CD4-positive, alpha-beta T cell (primary cell): ENCODE measurements at regions of chr10 and their contacts with region 1.

Region 1: GRCh38 chr10:18104223-18104872 is 35.9 kb upstream of the CACNB2 start:
- DNase-seq: peak in 11 of 14 experiments; percentile 5 to 44 (median 22)
- ATAC-seq: no peak
- H3K4me3 ChIP-seq: no peak overlapping the region
- H3K4me3 Mint-ChIP-seq: no peak overlapping the region
- H3K27ac ChIP-seq: no peak overlapping the region
- H3K27ac Mint-ChIP-seq: no peak overlapping the region
- H3K4me1 ChIP-seq: no peaks in the 10 kb centered on the region
- H3K4me1 Mint-ChIP-seq: no peaks in the 10 kb centered on the region
- H3K27me3 ChIP-seq: no peaks in the 10 kb centered on the region
- H3K27me3 Mint-ChIP-seq: peaks cover 3% of the 10 kb centered on the region
- CTCF ChIP-seq: peak; percentile 58

Region 2: DNA sequence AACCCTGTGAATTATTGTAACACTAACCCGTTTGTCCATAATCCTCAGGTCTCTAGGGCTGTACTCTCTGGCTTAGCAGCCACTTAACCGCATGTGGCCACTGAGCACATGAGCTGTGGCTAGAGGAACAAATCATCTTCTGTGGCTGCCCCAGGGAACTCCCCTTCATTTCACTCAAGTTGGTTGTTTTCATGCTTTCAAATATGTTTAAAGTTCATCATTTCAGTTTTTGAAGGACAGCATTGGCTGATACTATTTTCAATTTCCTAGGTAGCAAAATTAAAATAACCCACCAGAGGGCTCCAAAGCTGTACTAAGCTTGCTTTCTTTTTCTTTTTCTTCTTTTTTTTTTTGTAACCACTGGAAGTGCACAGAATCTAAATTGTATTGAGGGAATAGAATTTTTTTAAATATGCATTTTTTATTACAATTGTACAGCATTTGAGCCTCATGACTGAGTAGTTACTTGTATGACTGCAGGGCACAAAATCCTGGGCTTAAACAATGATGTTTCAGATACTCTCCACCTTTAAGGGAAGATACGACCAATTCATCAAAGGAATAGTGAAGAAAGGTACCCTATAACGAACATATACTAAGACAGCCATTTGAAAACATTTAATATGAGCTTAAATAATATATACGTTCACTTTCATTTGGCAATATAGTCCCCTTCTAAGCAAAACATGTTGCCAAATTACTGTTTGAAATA is 256.6 kb before region 1 on chr10:
- CTCF ChIA-PET with region 1: no interaction called
- POLR2A ChIA-PET with region 1: no interaction called
- intact Hi-C with region 1: loop called in 1 of 2 experiments (anchors 10 kb)
- DNase-seq: peak in 3 of 14 experiments; percentile 14 to 23 (median 16)
- ATAC-seq: peak; percentile 29
- H3K4me3 ChIP-seq: no peak overlapping the region
- H3K4me3 Mint-ChIP-seq: no peak overlapping the region
- H3K27ac ChIP-seq: no peak overlapping the region
- H3K27ac Mint-ChIP-seq: no peak overlapping the region
- H3K4me1 ChIP-seq: no peaks in the 10 kb centered on the region
- H3K4me1 Mint-ChIP-seq: peaks cover 10% of the 10 kb centered on the region
- H3K27me3 ChIP-seq: peaks cover 0 to 3% of the 10 kb centered on the region in 2 experiments
- H3K27me3 Mint-ChIP-seq: peaks cover 5% of the 10 kb centered on the region
- CTCF ChIP-seq: no peak

Region 3: DNA sequence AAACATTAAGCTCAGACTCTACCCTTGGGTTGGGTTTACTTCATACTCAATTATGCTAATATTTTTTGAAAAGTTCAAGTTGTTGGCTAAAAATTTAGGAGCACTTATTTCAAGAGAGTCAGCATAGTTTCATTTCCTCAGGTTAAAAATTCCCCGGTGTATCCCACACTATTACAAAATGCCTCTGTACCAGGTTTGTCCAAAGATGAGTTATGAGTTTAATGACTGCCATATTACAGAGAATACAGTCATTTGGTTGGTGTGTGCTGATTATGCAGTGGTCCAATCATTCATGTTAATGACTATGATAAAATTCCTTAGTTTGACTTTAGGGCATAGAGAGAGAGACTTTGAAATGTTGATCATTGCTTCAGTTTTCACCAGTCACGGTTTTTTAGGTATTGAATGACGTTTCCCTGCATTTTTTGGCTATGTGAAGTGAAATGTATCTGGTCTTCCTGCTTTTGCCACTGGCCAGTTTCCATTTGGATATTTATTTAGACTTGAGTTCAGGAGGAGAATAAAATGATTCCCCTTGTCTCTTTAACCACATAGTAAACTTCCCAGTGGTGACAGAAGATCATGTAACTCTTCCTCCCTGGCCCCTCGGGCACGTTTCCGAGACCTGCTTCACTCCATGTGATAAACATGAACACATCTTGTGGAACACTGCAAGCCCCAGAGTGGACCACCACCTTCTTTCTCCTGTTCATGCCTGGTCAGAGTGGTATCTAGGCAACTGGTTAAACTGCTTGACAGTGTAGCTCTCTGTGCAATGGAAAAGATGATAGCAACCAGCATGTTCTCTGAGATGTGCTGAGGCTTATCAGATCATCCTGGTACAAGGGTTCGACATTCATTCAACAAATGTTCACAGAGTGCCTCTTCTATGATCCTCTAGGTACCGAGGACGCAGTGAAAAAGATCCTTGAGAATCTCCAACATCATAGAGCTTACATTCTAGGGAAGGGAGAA is 189.5 kb after region 1 on chr10:
- CTCF ChIA-PET with region 1: no interaction called
- POLR2A ChIA-PET with region 1: no interaction called
- intact Hi-C with region 1: no loop called
- DNase-seq: peak in 1 of 14 experiments; percentile 7
- ATAC-seq: no peak
- H3K4me3 ChIP-seq: no peak overlapping the region
- H3K4me3 Mint-ChIP-seq: no peak overlapping the region
- H3K27ac ChIP-seq: no peak overlapping the region
- H3K27ac Mint-ChIP-seq: no peak overlapping the region
- H3K4me1 ChIP-seq: no peaks in the 10 kb centered on the region
- H3K4me1 Mint-ChIP-seq: no peaks in the 10 kb centered on the region
- H3K27me3 ChIP-seq: no peaks in the 10 kb centered on the region
- H3K27me3 Mint-ChIP-seq: no peaks in the 10 kb centered on the region
- CTCF ChIP-seq: no peak